Mammary epithelial cell (primary cell): ENCODE measurements at regions of chr19 and their contacts with region 1.

Region 1: GRCh38 chr19:12938234-12939025 is at the start of gene CALR:
- DNase-seq: peak; percentile 99
- H3K4me3 ChIP-seq: peak within 1 kb of the TSS; percentile 82 to 99 (median 98)
- H3K27ac ChIP-seq: peak within 1 kb of the TSS; percentile 78
- H3K4me1 ChIP-seq: peaks cover 29% of the 10 kb centered on the region
- H3K27me3 ChIP-seq: no peaks in the 10 kb centered on the region
- CTCF ChIP-seq: peak in 1 of 2 donors; percentile 35
- total RNA-seq, gene CALR: 1,117 to 1,135 TPM

Region 2: DNA sequence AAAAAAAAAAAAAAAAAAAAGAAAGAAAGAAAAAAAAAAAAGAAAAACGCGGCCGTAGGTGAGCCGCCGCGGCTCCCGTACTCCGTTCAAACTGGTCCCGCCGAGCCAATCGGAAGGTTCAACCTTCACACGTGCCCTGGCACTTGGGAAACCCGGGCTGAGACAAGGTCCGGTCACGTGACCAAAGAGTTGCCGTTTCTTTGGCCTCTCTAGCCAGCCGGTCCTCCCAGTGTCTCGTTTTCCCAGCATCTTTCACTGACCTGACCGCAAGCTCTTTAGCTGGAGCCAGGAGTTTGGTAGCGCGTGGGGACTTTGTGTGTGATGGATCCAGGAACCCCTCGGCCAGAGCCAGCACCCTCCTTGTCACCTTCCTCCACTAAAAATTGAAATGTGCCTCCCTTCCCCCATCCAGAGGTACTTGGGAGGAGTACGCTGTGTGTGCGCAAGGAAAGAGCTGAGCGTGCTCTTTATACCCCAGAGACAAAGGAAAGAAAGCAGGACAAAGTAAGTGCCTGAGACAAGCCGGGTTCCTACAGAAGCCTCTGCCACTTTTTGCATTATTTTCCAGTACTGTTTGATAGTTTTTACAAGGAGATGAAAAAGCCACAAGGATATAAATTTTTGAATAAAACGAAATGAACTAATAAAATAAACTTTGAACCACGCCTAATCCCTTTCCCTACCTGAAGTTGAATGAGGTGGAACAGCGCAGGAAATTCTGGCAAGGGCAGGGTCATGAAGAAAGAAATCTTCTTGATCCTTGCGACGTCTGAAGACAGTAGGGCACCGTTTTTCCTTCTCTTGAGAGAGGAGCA is 215.7 kb before region 1 on chr19:
- CTCF ChIA-PET with region 1: no interaction called
- dilution Hi-C with region 1: no loop called
- in situ Hi-C with region 1: no loop called
- intact Hi-C with region 1: loop called (anchors 5 kb)
- DNase-seq: peak; percentile 98
- H3K4me3 ChIP-seq: peak overlapping the region; percentile 79 to 95 (median 81)
- H3K27ac ChIP-seq: peak overlapping the region; percentile 81
- H3K4me1 ChIP-seq: peaks cover 34% of the 10 kb centered on the region
- H3K27me3 ChIP-seq: no peaks in the 10 kb centered on the region
- CTCF ChIP-seq: no peak

Region 3: GRCh38 chr19:12838182-12838885 is 100.1 kb before region 1 on chr19 and contains the start of gene MAST1:
- CTCF ChIA-PET with region 1: no interaction called
- dilution Hi-C with region 1: no loop called
- in situ Hi-C with region 1: no loop called
- intact Hi-C with region 1: no loop called
- DNase-seq: no peak
- H3K4me3 ChIP-seq: peak within 1 kb of the TSS in 1 of 3 experiments; percentile 40
- H3K27ac ChIP-seq: no peak within 1 kb of the TSS
- H3K4me1 ChIP-seq: peaks cover 14% of the 10 kb centered on the region
- H3K27me3 ChIP-seq: peaks cover 14% of the 10 kb centered on the region
- CTCF ChIP-seq: peak in 1 of 2 donors; percentile 18
- total RNA-seq, gene MAST1: 0.50 to 2.2 TPM

Region 4: DNA sequence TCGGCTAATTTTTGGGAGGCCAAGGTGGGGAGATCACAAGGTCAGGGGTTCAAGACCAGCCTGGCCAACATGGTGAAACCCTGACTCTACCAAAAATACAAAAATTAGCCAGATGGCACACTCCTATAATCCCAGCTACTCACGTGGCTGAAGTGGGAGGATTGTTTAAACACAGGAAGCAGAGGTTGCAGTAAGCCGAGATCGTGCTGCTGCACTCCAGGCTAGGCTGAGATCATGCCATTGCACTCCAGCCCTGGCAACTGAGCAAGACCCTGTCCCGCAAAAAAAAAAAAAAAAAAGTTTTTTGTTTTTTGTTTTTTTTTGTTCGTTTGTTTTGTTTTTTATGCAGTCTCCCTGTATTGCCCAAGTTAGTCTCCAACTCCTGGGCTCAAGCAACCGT is 78.9 kb before region 1 on chr19:
- CTCF ChIA-PET with region 1: no interaction called
- dilution Hi-C with region 1: no loop called
- in situ Hi-C with region 1: no loop called
- intact Hi-C with region 1: no loop called
- DNase-seq: no peak
- H3K4me3 ChIP-seq: no peak overlapping the region
- H3K27ac ChIP-seq: no peak overlapping the region
- H3K4me1 ChIP-seq: no peaks in the 10 kb centered on the region
- H3K27me3 ChIP-seq: no peaks in the 10 kb centered on the region
- CTCF ChIP-seq: no peak

Region 5: DNA sequence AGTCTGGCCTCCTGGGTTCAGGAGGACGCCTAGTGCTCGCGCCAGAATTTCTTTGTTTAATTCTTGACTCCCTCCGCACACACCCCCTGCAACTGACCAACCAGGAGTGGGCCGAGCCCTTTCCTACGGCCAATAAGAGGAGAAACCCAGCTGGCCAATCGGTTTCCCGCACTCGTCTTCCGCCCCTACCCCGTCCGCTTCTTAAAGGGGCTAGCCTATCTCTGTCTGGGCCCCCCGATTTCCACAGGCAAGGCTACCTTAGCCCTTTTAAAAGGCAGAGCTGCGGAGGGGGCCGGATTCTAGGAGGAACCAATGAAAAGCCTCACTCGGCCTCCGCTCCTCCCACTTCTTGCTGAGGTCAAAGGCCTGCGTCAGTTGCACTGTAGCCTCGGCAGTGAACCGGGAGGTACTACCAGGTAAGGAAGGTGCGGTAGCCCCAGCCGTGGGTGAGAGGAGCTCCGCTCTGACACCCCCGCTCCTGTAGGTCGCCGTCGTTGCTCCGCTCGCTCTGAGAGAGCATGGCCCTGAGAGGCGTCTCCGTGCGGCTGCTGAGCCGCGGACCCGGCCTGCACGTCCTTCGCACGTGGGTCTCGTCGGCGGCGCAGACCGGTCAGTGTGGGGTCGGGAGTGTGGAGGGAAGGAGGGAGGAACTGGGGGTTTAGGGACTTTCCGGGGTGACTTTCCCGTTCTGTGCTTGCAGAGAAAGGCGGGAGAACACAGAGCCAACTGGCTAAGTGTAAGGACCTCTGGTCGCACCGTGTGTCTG is 47.5 kb before region 1 on chr19 and contains the start of gene GCDH:
- CTCF ChIA-PET with region 1: no interaction called
- dilution Hi-C with region 1: no loop called
- in situ Hi-C with region 1: no loop called
- intact Hi-C with region 1: loop called (anchors 1 kb)
- DNase-seq: peak; percentile 99
- H3K4me3 ChIP-seq: peak within 1 kb of the TSS; percentile 64 to 87 (median 84)
- H3K27ac ChIP-seq: peak within 1 kb of the TSS; percentile 37
- H3K4me1 ChIP-seq: peaks cover 8% of the 10 kb centered on the region
- H3K27me3 ChIP-seq: no peaks in the 10 kb centered on the region
- CTCF ChIP-seq: no peak
- total RNA-seq, gene GCDH: 25.2 to 31.5 TPM

Region 6: GRCh38 chr19:13012690-13013608 is 74.5 kb after region 1 on chr19:
- CTCF ChIA-PET with region 1: no interaction called
- dilution Hi-C with region 1: no loop called
- in situ Hi-C with region 1: no loop called
- intact Hi-C with region 1: no loop called
- DNase-seq: peak; percentile 71
- H3K4me3 ChIP-seq: peak overlapping the region; percentile 41 to 65 (median 51)
- H3K27ac ChIP-seq: peak overlapping the region; percentile 80
- H3K4me1 ChIP-seq: peaks cover 63% of the 10 kb centered on the region
- H3K27me3 ChIP-seq: no peaks in the 10 kb centered on the region
- CTCF ChIP-seq: no peak

Region 7: GRCh38 chr19:13036366-13036976 is 98.0 kb after region 1 on chr19:
- CTCF ChIA-PET with region 1: no interaction called
- dilution Hi-C with region 1: no loop called
- in situ Hi-C with region 1: no loop called
- intact Hi-C with region 1: no loop called
- DNase-seq: peak; percentile 83
- H3K4me3 ChIP-seq: no peak overlapping the region
- H3K27ac ChIP-seq: peak overlapping the region; percentile 97
- H3K4me1 ChIP-seq: peaks cover 95% of the 10 kb centered on the region
- H3K27me3 ChIP-seq: no peaks in the 10 kb centered on the region
- CTCF ChIP-seq: no peak